Common myeloid progenitor, CD34-positive (primary cell): ENCODE measurements at regions of chr20 and their contacts with region 1.

Region 1: DNA sequence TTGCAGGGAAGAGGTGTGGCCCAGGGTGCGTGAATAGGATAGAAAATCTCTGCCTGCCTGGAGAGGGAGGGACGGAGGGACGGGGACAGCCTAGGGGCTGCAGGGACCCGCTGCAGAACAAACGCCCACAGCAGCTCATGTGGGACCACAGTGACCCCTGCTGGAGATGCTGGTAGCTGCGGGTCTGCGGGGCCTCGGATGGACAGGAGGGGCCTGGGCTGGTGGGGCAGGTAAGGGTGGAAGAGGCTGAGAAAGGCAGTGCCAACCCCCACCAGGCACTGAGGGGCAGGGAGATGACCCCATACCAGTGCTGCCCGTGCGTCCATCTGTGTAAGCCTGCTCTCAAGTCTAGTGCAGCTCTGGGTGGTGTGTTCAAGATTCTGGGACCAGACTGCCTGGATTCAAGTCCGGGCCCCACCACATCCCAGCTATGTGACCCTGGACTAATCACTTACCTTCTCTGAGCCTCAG is 39.4 kb downstream of the KIAA1755 start:
- DNase-seq: peak; percentile 51 to 73 (median 70)
- H3K4me3 ChIP-seq: no peak overlapping the region
- H3K27ac ChIP-seq: no peak overlapping the region
- H3K4me1 ChIP-seq: peaks cover 0 to 2% (median 0%) of the 10 kb centered on the region in 4 experiments
- H3K27me3 ChIP-seq: peaks cover 0 to 6% (median 0%) of the 10 kb centered on the region in 5 experiments

Region 2: DNA sequence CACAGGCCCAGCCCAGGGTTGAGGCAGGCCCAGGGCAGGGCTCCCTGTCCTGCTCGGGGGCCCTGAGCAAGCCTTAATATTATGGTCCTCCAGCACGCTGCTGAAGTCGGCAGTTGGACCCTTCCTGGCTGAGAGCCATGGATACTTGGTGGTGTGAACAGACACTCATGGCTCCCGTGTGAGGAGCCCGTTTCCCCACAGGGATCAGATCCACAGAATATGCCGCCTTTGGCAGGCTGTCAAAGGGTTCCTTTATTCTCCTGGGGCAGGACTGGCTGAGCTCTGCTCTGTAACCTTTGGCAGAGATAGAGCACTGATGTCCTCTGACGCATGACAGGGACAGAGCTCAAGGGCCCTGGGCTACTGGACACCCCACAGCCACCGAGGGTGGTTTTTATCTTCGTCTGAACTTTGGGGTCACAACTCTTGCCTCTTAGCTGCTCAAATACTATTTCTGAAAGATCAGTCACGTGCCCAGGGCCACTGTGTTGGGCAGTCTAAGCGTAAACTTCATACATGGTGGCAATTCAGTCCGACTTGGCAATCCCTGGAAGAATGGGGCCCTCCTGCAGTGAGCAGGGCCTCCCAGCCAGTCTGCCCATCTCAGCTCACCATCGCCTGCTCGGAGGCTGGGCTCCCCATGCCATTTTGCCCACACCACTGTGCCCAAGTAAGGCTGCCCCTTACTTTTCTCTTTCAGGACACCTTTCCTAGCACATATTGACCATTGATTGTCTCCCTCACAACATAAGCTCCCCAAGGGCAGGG is 237.0 kb before region 1 on chr20:
- CTCF ChIA-PET with region 1: no interaction called
- POLR2A ChIA-PET with region 1: no interaction called
- DNase-seq: no peak
- H3K4me3 ChIP-seq: no peak overlapping the region
- H3K27ac ChIP-seq: no peak overlapping the region
- H3K4me1 ChIP-seq: peaks cover 0 to under 1% (median 0%) of the 10 kb centered on the region in 4 experiments
- H3K27me3 ChIP-seq: no peaks in the 10 kb centered on the region

Region 3: GRCh38 chr20:38057351-38057972 is 163.7 kb before region 1 on chr20:
- CTCF ChIA-PET with region 1: interaction called, 141 read pairs
- POLR2A ChIA-PET with region 1: no interaction called
- DNase-seq: peak; percentile 65 to 73 (median 70)
- H3K4me3 ChIP-seq: no peak overlapping the region
- H3K27ac ChIP-seq: no peak overlapping the region
- H3K4me1 ChIP-seq: peaks cover 0 to 2% (median 0%) of the 10 kb centered on the region in 4 experiments
- H3K27me3 ChIP-seq: no peaks in the 10 kb centered on the region

Region 4: GRCh38 chr20:38091441-38092216 is 129.5 kb before region 1 on chr20:
- CTCF ChIA-PET with region 1: interaction called, 12 read pairs
- POLR2A ChIA-PET with region 1: no interaction called
- DNase-seq: no peak
- H3K4me3 ChIP-seq: no peak overlapping the region
- H3K27ac ChIP-seq: peak overlapping the region in 1 of 2 experiments; percentile 32
- H3K4me1 ChIP-seq: peaks cover 2 to 25% (median 6%) of the 10 kb centered on the region in 4 experiments
- H3K27me3 ChIP-seq: no peaks in the 10 kb centered on the region

Region 5: GRCh38 chr20:38113401-38114325 is 107.5 kb before region 1 on chr20:
- CTCF ChIA-PET with region 1: interaction called, 43 read pairs
- POLR2A ChIA-PET with region 1: no interaction called
- DNase-seq: peak; percentile 52 to 75 (median 73)
- H3K4me3 ChIP-seq: no peak overlapping the region
- H3K27ac ChIP-seq: no peak overlapping the region
- H3K4me1 ChIP-seq: peaks cover 0 to 8% (median 4%) of the 10 kb centered on the region in 4 experiments
- H3K27me3 ChIP-seq: no peaks in the 10 kb centered on the region

Region 6: GRCh38 chr20:38210741-38211140 is 10.4 kb before region 1 on chr20:
- CTCF ChIA-PET with region 1: interaction called, 18 read pairs
- POLR2A ChIA-PET with region 1: no interaction called
- DNase-seq: peak in 2 of 3 donors; percentile 52 to 56
- H3K4me3 ChIP-seq: no peak overlapping the region
- H3K27ac ChIP-seq: no peak overlapping the region
- H3K4me1 ChIP-seq: no peaks in the 10 kb centered on the region
- H3K27me3 ChIP-seq: peaks cover 0 to 2% (median 2%) of the 10 kb centered on the region in 5 experiments